Activated CD8-positive, alpha-beta T cell treated with anti-CD3 and anti-CD28 coated beads for 36 hours (primary cell): ENCODE measurements at regions of chr2 and their contacts with region 1.

Region 1: GRCh38 chr2:85888684-85889626 is at the start of gene ST3GAL5:
- DNase-seq: peak; percentile 91
- ATAC-seq: peak; percentile 81
- H3K4me3 Mint-ChIP-seq: peak within 1 kb of the TSS; percentile 94
- H3K27ac Mint-ChIP-seq: peak within 1 kb of the TSS; percentile 92
- H3K4me1 Mint-ChIP-seq: peaks cover 67% of the 10 kb centered on the region
- H3K27me3 Mint-ChIP-seq: no peaks in the 10 kb centered on the region
- CTCF ChIP-seq: peak; percentile 82
- total RNA-seq, gene ST3GAL5: 21.1 to 21.5 TPM

Region 2: GRCh38 chr2:85390941-85391669 is 497.9 kb before region 1 on chr2:
- CTCF ChIA-PET with region 1: no interaction called
- POLR2A ChIA-PET with region 1: no interaction called
- intact Hi-C with region 1: no loop called
- DNase-seq: peak; percentile 85
- ATAC-seq: peak; percentile 88
- H3K4me3 Mint-ChIP-seq: no peak overlapping the region
- H3K27ac Mint-ChIP-seq: no peak overlapping the region
- H3K4me1 Mint-ChIP-seq: peaks cover 3% of the 10 kb centered on the region
- H3K27me3 Mint-ChIP-seq: no peaks in the 10 kb centered on the region
- CTCF ChIP-seq: peak; percentile 67

Region 3: GRCh38 chr2:85826990-85827878 is 61.7 kb before region 1 on chr2:
- CTCF ChIA-PET with region 1: interaction called, 129 read pairs
- POLR2A ChIA-PET with region 1: interaction called, 10 read pairs
- intact Hi-C with region 1: loop called (anchors 5 kb)
- DNase-seq: peak; percentile 92
- ATAC-seq: peak; percentile 96
- H3K4me3 Mint-ChIP-seq: no peak overlapping the region
- H3K27ac Mint-ChIP-seq: peak overlapping the region; percentile 28
- H3K4me1 Mint-ChIP-seq: peaks cover 28% of the 10 kb centered on the region
- H3K27me3 Mint-ChIP-seq: peaks cover 2% of the 10 kb centered on the region
- CTCF ChIP-seq: peak; percentile 89

Region 4: GRCh38 chr2:85852937-85853498 is 35.9 kb before region 1 on chr2:
- CTCF ChIA-PET with region 1: interaction called, 41 read pairs
- POLR2A ChIA-PET with region 1: interaction called, 23 read pairs
- intact Hi-C with region 1: loop called (anchors 5 kb)
- DNase-seq: peak; percentile 81
- ATAC-seq: peak; percentile 83
- H3K4me3 Mint-ChIP-seq: peak overlapping the region; percentile 71
- H3K27ac Mint-ChIP-seq: peak overlapping the region; percentile 99
- H3K4me1 Mint-ChIP-seq: peaks cover 59% of the 10 kb centered on the region
- H3K27me3 Mint-ChIP-seq: no peaks in the 10 kb centered on the region
- CTCF ChIP-seq: no peak

Region 5: DNA sequence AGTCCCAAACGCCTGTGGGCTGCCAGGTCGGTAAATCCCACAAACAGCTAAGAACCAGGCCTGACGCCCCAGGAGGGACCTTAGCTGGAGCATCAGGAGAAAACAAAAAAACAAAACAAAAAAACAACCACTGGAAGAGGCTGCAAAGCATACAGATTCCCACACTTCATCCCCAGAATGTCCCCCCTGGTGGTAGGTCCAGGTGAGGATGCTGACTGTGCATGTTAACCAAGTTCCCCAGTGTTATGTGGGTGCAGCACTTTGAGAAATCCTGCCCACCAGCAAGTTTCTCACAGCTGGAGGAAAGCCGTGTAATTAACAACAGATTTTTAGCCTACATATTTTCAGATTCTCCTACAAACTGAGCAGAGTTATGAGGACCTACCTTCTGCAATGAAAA is 15.3 kb before region 1 on chr2:
- CTCF ChIA-PET with region 1: interaction called, 29 read pairs
- POLR2A ChIA-PET with region 1: interaction called, 3 read pairs
- intact Hi-C with region 1: no loop called
- DNase-seq: peak; percentile 13
- ATAC-seq: no peak
- H3K4me3 Mint-ChIP-seq: no peak overlapping the region
- H3K27ac Mint-ChIP-seq: no peak overlapping the region
- H3K4me1 Mint-ChIP-seq: peaks cover 45% of the 10 kb centered on the region
- H3K27me3 Mint-ChIP-seq: no peaks in the 10 kb centered on the region
- CTCF ChIP-seq: peak; percentile 18

Region 6: DNA sequence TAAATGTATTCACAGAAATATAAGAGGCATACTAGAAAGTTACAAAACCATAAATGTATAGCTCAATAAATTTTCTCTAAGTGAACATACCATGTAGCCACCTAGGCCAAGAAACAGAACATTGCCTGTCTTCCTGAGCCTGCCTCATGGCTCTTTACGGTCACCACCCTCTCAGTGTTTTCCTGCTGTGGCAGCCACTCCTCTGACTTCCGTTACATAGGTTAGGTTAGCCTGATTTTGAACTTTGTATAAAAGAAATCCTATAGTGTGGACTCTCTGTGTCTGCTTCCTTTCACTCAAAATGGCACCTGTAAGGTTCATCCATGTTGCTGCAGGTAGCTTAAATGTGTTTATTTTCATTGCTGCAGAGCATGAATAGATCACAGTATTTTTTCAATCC is 11.4 kb after region 1 on chr2:
- CTCF ChIA-PET with region 1: interaction called, 19 read pairs
- POLR2A ChIA-PET with region 1: no interaction called
- intact Hi-C with region 1: no loop called
- DNase-seq: no peak
- ATAC-seq: no peak
- H3K4me3 Mint-ChIP-seq: no peak overlapping the region
- H3K27ac Mint-ChIP-seq: no peak overlapping the region
- H3K4me1 Mint-ChIP-seq: peaks cover 27% of the 10 kb centered on the region
- H3K27me3 Mint-ChIP-seq: no peaks in the 10 kb centered on the region
- CTCF ChIP-seq: no peak

Region 7: DNA sequence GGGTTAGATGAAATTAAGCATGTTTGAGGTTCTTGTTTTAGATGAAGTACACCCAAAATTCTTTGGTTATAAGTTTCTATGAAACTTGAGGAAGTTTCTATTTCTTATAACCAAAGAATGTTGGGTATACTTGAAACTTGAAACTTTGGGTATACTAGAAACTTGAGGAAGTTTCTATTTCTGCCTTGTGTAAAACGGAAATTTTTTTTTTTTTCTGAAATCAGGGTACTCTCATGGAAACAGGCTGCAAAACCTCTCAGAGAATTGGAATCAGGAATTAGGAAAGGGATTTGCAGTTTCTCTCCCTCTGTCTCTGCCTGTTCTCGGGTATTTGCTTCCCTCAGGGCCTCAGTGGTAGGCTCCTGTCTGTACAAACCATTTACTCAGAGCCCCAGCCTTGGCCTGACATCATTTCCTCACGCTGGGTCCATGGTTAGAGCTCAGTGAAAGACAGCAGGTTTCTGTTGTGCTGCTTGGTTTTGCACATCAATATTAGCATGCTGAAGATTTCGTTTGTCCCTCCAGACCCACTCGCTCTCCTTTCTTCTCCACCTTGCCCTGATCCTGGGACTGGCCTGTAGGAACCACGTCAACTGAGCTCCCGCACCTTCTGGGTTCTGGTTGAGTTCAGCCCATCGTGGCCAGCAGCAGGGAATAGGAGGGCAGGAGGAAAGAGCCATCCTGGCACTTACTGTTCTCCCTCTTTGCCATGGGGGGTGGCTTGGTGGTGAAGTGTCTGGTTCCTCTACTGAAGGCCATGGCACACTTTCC is 110.3 kb after region 1 on chr2:
- CTCF ChIA-PET with region 1: interaction called, 13 read pairs
- POLR2A ChIA-PET with region 1: interaction called, 4 read pairs
- intact Hi-C with region 1: no loop called
- DNase-seq: peak; percentile 75
- ATAC-seq: peak; percentile 94
- H3K4me3 Mint-ChIP-seq: peak overlapping the region; percentile 55
- H3K27ac Mint-ChIP-seq: peak overlapping the region; percentile 88
- H3K4me1 Mint-ChIP-seq: peaks cover 58% of the 10 kb centered on the region
- H3K27me3 Mint-ChIP-seq: no peaks in the 10 kb centered on the region
- CTCF ChIP-seq: no peak

Region 8: DNA sequence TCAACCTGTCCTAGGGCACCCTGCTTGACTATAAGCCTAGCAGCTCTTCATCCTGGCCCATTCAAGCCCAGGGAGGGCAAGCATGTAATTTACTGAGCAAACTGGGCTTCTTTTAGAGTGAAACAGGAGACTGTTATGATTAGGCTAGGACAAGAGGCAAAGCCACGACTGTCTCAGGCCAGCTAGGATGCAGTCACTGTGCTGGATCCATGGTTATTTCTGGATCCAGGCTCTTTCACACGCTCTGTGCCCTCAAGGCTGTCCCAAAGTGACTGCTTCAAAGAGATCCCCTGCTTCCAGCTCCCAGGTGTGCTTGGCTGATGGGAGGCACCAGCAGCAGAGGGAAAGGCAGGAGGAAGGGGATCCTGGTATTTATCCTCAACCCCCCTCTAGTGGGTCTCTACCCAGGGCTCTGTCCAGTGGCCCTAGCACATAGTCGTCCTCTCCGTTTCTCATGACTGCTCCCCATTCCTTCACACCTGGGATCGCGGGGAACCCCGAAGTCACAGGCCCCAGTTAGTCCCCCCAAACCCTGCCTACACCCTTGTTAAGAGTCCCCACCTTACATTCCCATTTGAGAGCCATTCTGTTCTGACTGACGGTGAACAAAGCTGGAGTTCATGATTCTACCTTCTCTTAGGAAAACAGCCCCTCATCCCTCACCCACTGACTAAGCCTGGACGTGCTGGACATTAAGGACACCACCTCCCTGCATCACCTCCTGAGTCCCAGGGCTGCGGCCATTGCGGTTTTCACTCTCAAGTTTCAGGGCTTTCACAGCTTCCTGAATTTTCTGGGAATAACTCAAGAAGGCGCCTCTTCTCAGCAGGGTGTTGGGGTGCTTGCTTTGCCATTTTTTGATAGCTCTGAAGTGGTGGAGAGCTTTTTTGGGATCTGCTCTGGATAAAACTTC is 153.6 kb after region 1 on chr2:
- CTCF ChIA-PET with region 1: interaction called, 63 read pairs
- POLR2A ChIA-PET with region 1: interaction called, 19 read pairs
- intact Hi-C with region 1: loop called (anchors 2 kb)
- DNase-seq: no peak
- ATAC-seq: no peak
- H3K4me3 Mint-ChIP-seq: no peak overlapping the region
- H3K27ac Mint-ChIP-seq: peak overlapping the region; percentile 63
- H3K4me1 Mint-ChIP-seq: peaks cover 49% of the 10 kb centered on the region
- H3K27me3 Mint-ChIP-seq: no peaks in the 10 kb centered on the region
- CTCF ChIP-seq: no peak

Region 9: GRCh38 chr2:86052676-86053075 is 163.7 kb after region 1 on chr2:
- CTCF ChIA-PET with region 1: no interaction called
- POLR2A ChIA-PET with region 1: no interaction called
- intact Hi-C with region 1: no loop called
- DNase-seq: no peak
- ATAC-seq: no peak
- H3K4me3 Mint-ChIP-seq: no peak overlapping the region
- H3K27ac Mint-ChIP-seq: no peak overlapping the region
- H3K4me1 Mint-ChIP-seq: no peaks in the 10 kb centered on the region
- H3K27me3 Mint-ChIP-seq: no peaks in the 10 kb centered on the region
- CTCF ChIP-seq: no peak